CD4-positive, alpha-beta memory T cell (primary cell): ENCODE measurements at regions of chr7 and their contacts with region 1.

Region 1: DNA sequence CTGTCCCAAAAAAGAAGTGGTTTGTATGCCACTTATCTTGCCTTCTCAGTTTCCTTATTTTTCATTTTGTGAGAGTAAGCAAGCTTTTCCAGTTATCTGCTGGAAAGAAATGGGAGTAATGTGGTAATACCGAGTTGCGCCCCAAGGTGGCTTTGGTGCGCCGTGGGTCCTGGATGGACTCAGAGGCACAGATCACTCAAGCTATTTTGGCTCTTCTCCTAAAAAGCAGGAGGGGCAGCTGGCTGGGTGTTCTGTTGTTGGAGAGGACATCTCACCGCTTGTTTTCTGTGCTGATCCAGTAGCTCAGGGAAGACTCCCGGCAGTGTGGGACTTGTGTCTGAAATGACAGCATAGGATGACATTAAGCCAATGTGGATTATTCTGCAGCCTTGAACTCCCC is 16.4 kb downstream of the PRKRIP1 start:
- DNase-seq: peak in 4 of 5 donors; percentile 42 to 56 (median 44)
- H3K4me3 ChIP-seq: no peak overlapping the region
- H3K4me3 Mint-ChIP-seq: no peak overlapping the region
- H3K27ac ChIP-seq: no peak overlapping the region
- H3K27ac Mint-ChIP-seq: peak overlapping the region; percentile 53 to 92 (median 78)
- H3K4me1 ChIP-seq: peaks cover 37% of the 10 kb centered on the region
- H3K4me1 Mint-ChIP-seq: peaks cover 24 to 41% (median 31%) of the 10 kb centered on the region in 4 donors
- H3K27me3 ChIP-seq: no peaks in the 10 kb centered on the region
- H3K27me3 Mint-ChIP-seq: no peaks in the 10 kb centered on the region

Region 2: GRCh38 chr7:102425639-102426267 is 13.2 kb after region 1 on chr7:
- CTCF ChIA-PET with region 1: interaction called, 36 read pairs
- POLR2A ChIA-PET with region 1: interaction called, 496 read pairs
- intact Hi-C with region 1: loop called (anchors 1 kb)
- DNase-seq: peak; percentile 80 to 94 (median 84)
- H3K4me3 ChIP-seq: peak overlapping the region; percentile 48 to 49
- H3K4me3 Mint-ChIP-seq: peak overlapping the region; percentile 83 to 92 (median 87)
- H3K27ac ChIP-seq: peak overlapping the region; percentile 98
- H3K27ac Mint-ChIP-seq: peak overlapping the region; percentile 100
- H3K4me1 ChIP-seq: peaks cover 83% of the 10 kb centered on the region
- H3K4me1 Mint-ChIP-seq: peaks cover 39 to 75% (median 56%) of the 10 kb centered on the region in 4 donors
- H3K27me3 ChIP-seq: no peaks in the 10 kb centered on the region
- H3K27me3 Mint-ChIP-seq: no peaks in the 10 kb centered on the region

Region 3: DNA sequence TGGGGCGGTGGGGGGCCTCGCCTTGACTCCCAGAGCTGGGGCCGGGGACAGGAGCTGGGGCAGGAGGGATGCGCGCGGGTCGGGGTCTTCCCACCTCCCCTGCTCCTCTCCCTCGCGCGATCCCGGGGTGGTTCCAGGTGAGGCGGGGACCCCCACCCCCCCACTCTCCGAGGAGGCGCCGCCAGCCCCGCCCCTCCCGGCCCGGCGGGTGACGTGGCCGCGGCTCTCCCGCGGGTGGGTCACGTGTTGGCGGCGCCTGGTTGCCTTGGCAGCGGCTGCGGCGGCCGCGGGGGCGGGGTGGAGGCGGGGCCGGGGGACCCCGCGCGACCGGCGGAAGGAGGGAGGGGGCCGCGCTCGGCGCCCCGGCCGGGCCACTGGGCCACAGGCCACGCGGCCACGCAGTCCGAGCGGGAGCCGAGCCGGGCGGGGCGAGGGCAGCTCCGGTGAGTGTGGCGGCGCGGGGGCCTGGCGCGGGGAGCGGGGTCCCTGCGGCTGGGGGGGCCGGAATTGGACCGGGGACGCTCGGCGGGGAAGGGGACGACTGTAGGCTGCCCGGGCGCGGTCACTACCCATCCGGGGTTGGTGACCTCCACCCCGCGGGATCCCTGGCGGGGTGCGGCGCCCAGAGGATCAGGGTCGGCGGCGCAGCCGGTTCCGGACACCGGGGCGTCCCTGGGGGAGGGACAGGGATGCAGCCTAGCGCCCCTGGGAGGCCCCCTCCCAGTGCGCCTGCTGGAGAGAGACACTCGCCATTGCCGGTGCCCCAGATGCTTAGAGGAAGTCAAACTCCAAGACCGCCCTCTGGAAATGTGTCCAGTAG is 20.9 kb after region 1 on chr7 and contains the start of gene ORAI2:
- CTCF ChIA-PET with region 1: interaction called, 17 read pairs
- POLR2A ChIA-PET with region 1: interaction called, 496 read pairs
- intact Hi-C with region 1: no loop called
- DNase-seq: peak; percentile 81 to 86 (median 84)
- H3K4me3 ChIP-seq: peak within 1 kb of the TSS; percentile 74 to 76
- H3K4me3 Mint-ChIP-seq: peak within 1 kb of the TSS; percentile 80 to 90 (median 88)
- H3K27ac ChIP-seq: peak within 1 kb of the TSS; percentile 88
- H3K27ac Mint-ChIP-seq: peak within 1 kb of the TSS; percentile 98 to 100 (median 100)
- H3K4me1 ChIP-seq: peaks cover 61% of the 10 kb centered on the region
- H3K4me1 Mint-ChIP-seq: peaks cover 26 to 62% (median 43%) of the 10 kb centered on the region in 4 donors
- H3K27me3 ChIP-seq: no peaks in the 10 kb centered on the region
- H3K27me3 Mint-ChIP-seq: no peaks in the 10 kb centered on the region
- total RNA-seq, gene ORAI2: 29.0 to 31.6 TPM